WTC11 (cell line): ENCODE measurements at regions of chr19 and their contacts with region 1.

Region 1: GRCh38 chr19:1241417-1242095 is at the start of gene ATP5F1D:
- DNase-seq: peak; percentile 95
- ATAC-seq: peak; percentile 43
- H3K4me3 Mint-ChIP-seq: peak within 1 kb of the TSS; percentile 86
- H3K27ac Mint-ChIP-seq: peak within 1 kb of the TSS; percentile 87
- H3K4me1 Mint-ChIP-seq: peaks cover 26% of the 10 kb centered on the region
- H3K27me3 Mint-ChIP-seq: peaks cover 4% of the 10 kb centered on the region; the same call in 1 of the 2 replicates
- CTCF ChIP-seq: no peak
- total RNA-seq, gene ATP5F1D: 262 to 277 TPM (median 270 TPM) in 3 replicates

Region 2: DNA sequence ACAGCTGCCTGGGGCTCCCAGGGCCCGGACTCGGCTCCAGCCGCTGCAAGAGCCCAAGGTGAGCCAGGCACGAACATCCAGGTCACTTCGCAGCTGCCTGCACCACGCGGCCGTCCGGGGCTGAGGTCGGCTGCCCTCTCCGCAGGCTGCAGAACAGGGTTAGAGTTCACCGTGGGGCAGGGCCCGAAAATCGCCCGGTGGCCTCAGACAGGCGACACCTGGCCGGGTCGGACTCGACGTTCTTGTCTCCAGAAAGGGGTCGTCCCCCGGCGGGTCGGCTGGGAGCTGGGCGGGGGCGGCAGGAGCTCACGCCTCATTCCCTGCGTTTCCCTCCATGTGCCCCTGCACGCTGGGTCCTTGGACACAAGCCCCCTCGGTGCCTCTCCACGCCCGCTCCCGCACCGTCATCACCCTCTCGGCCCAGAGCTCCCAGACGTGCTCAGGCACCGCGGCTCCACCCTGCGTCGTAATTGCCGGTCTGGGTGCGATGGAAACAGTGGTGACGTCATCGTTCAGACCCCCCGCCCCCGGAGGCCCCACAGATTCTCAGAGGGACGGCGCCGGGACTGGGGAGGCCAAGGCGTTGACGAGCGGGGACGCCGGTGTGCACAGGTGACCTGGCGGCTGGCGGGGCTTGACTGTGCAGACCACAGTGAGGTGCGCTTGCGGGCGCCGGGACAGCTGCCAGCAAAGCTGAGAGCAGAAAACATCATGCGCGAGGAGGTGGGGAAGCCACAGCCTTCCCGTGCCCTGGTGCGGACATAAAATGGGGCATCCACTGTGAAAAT is 245.3 kb before region 1 on chr19:
- CTCF ChIA-PET with region 1: interaction called, 10 read pairs
- POLR2A ChIA-PET with region 1: no interaction called
- DNase-seq: peak; percentile 67
- ATAC-seq: peak; percentile 8
- H3K4me3 Mint-ChIP-seq: peak overlapping the region; percentile 57
- H3K27ac Mint-ChIP-seq: no peak overlapping the region
- H3K4me1 Mint-ChIP-seq: peaks cover 5% of the 10 kb centered on the region; the same call in 1 of the 2 replicates
- H3K27me3 Mint-ChIP-seq: peaks cover 39% of the 10 kb centered on the region
- CTCF ChIP-seq: no peak

Region 3: GRCh38 chr19:1035998-1036621 is 205.4 kb before region 1 on chr19:
- CTCF ChIA-PET with region 1: no interaction called
- POLR2A ChIA-PET with region 1: no interaction called
- DNase-seq: peak; percentile 51
- ATAC-seq: peak; percentile 2; the same call in 1 of the 2 replicates
- H3K4me3 Mint-ChIP-seq: no peak overlapping the region
- H3K27ac Mint-ChIP-seq: no peak overlapping the region
- H3K4me1 Mint-ChIP-seq: peaks cover 12% of the 10 kb centered on the region
- H3K27me3 Mint-ChIP-seq: no peaks in the 10 kb centered on the region
- CTCF ChIP-seq: no peak

Region 4: GRCh38 chr19:1070576-1070930 is 171.0 kb before region 1 on chr19:
- CTCF ChIA-PET with region 1: interaction called, 19 read pairs
- POLR2A ChIA-PET with region 1: no interaction called
- DNase-seq: peak; percentile 77
- ATAC-seq: peak; percentile 49
- H3K4me3 Mint-ChIP-seq: peak overlapping the region; percentile 52
- H3K27ac Mint-ChIP-seq: no peak overlapping the region
- H3K4me1 Mint-ChIP-seq: peaks cover 11% of the 10 kb centered on the region
- H3K27me3 Mint-ChIP-seq: peaks cover 29% of the 10 kb centered on the region
- CTCF ChIP-seq: no peak

Region 5: GRCh38 chr19:1213391-1214286 is 27.9 kb before region 1 on chr19:
- CTCF ChIA-PET with region 1: interaction called, 14 read pairs
- POLR2A ChIA-PET with region 1: no interaction called
- DNase-seq: no peak
- ATAC-seq: no peak
- H3K4me3 Mint-ChIP-seq: no peak overlapping the region
- H3K27ac Mint-ChIP-seq: peak overlapping the region; percentile 73
- H3K4me1 Mint-ChIP-seq: peaks cover 44% of the 10 kb centered on the region
- H3K27me3 Mint-ChIP-seq: no peaks in the 10 kb centered on the region
- CTCF ChIP-seq: no peak

Region 6: GRCh38 chr19:1230585-1231489 is 10.7 kb before region 1 on chr19:
- CTCF ChIA-PET with region 1: interaction called, 10 read pairs
- POLR2A ChIA-PET with region 1: no interaction called
- DNase-seq: no peak
- ATAC-seq: peak; percentile 62
- H3K4me3 Mint-ChIP-seq: no peak overlapping the region
- H3K27ac Mint-ChIP-seq: no peak overlapping the region
- H3K4me1 Mint-ChIP-seq: no peaks in the 10 kb centered on the region
- H3K27me3 Mint-ChIP-seq: no peaks in the 10 kb centered on the region
- CTCF ChIP-seq: no peak

Region 7: GRCh38 chr19:1275260-1275975 is 33.9 kb after region 1 on chr19 and contains the start of gene FAM174C:
- CTCF ChIA-PET with region 1: interaction called, 24 read pairs
- POLR2A ChIA-PET with region 1: interaction called, 6 read pairs
- DNase-seq: peak; percentile 95
- ATAC-seq: peak; percentile 68
- H3K4me3 Mint-ChIP-seq: peak within 1 kb of the TSS; percentile 71
- H3K27ac Mint-ChIP-seq: peak within 1 kb of the TSS; percentile 95
- H3K4me1 Mint-ChIP-seq: peaks cover 34% of the 10 kb centered on the region
- H3K27me3 Mint-ChIP-seq: no peaks in the 10 kb centered on the region
- CTCF ChIP-seq: no peak
- total RNA-seq, gene FAM174C: 59.4 to 65.9 TPM (median 65.7 TPM) in 3 replicates

Region 8: GRCh38 chr19:1324806-1325567 is 83.4 kb after region 1 on chr19:
- CTCF ChIA-PET with region 1: no interaction called
- POLR2A ChIA-PET with region 1: no interaction called
- DNase-seq: peak; percentile 64
- ATAC-seq: peak; percentile 43
- H3K4me3 Mint-ChIP-seq: peak overlapping the region; percentile 62
- H3K27ac Mint-ChIP-seq: no peak overlapping the region
- H3K4me1 Mint-ChIP-seq: no peaks in the 10 kb centered on the region
- H3K27me3 Mint-ChIP-seq: peaks cover 4% of the 10 kb centered on the region; the same call in 1 of the 2 replicates
- CTCF ChIP-seq: no peak

Region 9: DNA sequence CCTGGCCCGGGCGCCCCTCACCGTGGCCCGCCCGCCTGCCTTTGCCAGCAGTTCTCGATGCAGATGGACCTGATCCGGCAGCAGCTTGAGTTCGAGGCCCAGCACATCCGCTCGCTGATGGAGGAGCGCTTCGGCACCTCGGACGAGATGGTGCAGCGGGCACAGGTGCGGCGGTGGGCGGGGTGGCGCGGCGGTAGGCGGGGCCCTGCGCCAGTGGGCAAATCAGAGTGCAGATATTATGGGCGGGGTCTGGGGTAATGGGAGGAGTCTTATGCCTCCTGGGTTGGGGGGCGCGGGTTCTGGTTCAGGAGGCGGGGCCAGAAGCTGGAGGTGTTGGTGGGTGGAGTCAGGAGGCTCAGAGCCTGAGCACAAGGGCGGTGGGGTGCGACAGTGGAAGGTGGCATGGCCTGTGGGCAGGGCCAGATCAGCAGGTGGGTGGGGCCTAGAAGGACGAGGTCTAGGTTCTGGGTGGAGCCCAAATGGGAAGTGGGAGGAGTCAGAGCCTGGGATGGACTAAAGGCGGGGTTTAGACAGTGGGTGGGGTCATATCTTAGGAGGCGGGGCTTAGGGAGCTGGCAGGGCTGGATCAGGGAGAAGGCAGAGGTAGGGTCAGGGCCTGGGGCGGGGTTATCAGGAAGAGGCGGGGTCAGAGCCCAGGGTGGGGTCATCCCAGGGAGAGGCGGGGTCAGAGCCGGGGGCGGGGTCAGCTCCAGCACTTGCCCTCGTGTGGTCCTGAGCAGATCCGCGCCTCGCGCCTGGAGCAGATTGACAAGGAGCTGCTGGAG is 214.0 kb after region 1 on chr19:
- CTCF ChIA-PET with region 1: interaction called, 12 read pairs
- POLR2A ChIA-PET with region 1: interaction called, 3 read pairs
- DNase-seq: peak; percentile 99
- ATAC-seq: peak; percentile 88
- H3K4me3 Mint-ChIP-seq: peak overlapping the region; percentile 47
- H3K27ac Mint-ChIP-seq: no peak overlapping the region
- H3K4me1 Mint-ChIP-seq: peaks cover 6% of the 10 kb centered on the region; the same call in 1 of the 2 replicates
- H3K27me3 Mint-ChIP-seq: peaks cover 55% of the 10 kb centered on the region
- CTCF ChIP-seq: no peak